Vagina (tissue), 2 donors: ENCODE measurements at regions of chr1 and their contacts with region 1.

Region 1: DNA sequence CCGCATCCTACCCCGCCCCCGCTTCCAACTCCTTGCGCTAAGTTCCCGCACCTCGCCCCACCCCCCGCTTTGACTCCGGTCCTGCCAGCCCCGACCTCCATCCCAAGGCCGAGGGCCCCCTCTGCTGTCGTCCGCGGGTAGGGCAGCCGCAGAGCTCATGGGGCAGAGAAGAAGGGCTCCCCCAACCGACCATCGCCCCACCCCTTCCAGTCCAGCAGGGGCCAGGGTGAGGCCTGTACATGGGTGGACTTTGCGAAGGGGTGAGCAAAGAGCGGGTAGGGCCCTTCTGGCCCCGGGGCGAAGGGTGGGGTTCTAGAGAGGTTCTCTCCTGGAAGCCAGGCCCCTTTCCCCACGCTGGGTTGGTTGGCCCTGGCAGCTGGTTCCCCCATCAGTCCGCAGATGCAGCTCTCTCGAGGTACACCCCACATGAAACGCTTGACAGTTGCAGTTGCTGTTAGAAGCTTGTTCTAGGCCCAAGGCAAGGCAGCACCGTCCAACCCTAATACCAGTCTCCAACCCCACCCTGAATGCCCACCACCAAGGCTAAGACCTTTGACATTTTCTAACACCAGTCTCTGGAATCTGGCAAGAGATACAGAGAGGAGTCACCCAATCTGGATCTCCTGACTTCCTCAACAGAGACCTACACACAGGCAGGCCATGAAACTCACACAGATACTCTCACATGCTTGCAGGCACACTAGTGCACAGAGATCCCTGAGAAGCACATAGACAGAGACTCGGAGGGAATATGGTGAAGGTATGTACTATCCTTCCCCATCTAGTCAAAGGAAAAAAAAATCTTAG is 25.3 kb upstream of the ADGRB2 start:
- DNase-seq: no peak
- H3K4me3 ChIP-seq: peak overlapping the region; percentile 64 to 74
- H3K27ac ChIP-seq: peak overlapping the region; percentile 91
- H3K4me1 ChIP-seq: peaks cover 19% of the 10 kb centered on the region
- H3K27me3 ChIP-seq: no peaks in the 10 kb centered on the region
- CTCF ChIP-seq: peak; percentile 73 to 93 (median 88)
- POLR2A ChIP-seq: no peak

Region 2: DNA sequence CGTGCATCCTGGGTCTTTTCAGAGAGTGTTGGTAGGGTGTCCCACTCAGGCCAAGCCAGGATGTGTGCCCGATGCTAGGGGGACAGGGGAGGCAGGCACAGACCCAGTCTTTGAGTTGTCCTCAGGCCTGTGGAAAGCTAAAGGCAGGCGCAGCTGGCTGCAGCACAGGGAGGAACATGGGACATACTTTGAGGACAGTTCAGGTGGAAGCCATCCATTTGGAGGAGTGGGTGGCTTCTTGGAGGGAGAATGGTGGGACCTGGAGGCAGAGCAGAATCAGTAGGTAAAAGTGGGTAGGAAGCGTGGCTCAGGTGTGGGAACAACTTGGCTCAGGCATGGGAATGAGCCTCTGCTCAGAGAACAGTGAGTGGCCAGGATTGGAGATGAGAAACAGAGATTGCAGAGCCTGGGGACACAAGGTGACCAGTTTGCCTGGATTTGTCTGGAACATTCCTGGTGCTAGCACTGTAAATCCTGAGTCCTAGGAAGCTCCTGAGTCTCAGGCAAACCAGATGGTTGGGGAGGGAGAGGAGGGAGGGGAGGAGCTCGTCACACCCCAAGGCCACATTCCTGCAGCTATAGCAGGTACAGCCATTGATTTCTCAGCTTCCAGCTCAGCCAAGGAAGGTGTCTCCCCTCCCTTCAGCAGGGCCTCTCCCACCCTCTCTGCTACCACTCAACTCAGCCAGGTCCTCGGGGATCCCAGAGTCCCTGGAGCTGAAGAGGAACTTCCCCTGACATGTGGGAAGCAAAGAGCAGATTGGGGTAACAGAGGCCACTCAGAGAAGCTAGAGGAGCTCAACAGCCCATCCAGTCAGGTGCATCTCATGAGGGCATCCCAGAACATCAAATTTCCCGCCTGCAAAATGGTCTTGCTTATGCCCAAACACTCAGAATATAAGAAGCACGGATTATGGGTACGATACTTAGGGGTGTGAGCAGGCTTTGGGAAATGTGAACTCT is 278.3 kb before region 1 on chr1:
- intact Hi-C with region 1: no loop called
- DNase-seq: no peak
- H3K4me3 ChIP-seq: no peak overlapping the region
- H3K27ac ChIP-seq: no peak overlapping the region
- H3K4me1 ChIP-seq: no peaks in the 10 kb centered on the region
- H3K27me3 ChIP-seq: no peaks in the 10 kb centered on the region
- CTCF ChIP-seq: no peak
- POLR2A ChIP-seq: no peak

Region 3: DNA sequence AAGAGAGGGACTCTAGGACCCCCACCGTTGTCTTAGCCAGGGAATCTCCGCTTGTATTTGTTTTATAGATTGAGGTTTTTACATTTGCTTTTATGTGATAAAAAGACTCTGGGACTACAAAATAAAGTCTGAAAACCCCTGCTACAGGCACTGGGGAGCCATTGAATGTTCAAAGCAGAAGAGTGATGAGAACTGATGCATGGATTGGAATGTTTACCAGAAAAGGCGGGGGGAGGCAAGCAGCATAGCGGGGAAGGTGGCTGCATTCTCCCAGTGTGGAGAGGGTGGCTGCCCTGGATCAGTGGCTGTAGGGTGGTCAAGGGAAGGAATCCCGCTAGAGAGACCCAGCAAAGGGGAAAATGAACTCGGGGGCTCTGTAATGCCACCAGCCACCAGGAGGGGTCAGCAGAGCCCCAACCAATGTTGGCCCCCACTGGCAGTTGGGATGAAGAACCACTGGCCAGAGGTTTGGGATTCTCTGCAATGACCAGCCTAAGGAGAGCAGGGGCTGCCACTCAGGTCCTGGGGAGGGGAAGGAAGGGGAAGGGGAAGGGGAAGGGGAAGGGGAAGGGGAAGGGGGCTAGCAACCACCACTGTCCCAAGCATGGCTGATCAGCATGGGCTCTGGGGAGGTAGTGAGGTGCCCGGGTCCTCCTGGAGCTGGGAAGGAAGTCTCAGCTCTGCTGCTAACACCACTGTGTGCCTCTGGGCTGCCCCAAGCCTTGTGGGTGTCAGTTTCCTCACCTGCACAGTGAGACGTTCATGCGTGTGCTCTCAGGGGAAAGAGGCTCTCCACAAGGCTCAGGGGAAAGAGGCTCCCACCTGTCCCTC is 125.6 kb before region 1 on chr1:
- intact Hi-C with region 1: loop called (anchors 2 kb)
- DNase-seq: no peak
- H3K4me3 ChIP-seq: no peak overlapping the region
- H3K27ac ChIP-seq: no peak overlapping the region
- H3K4me1 ChIP-seq: peaks cover 38% of the 10 kb centered on the region
- H3K27me3 ChIP-seq: no peaks in the 10 kb centered on the region
- CTCF ChIP-seq: peak; percentile 89 to 98 (median 92)
- POLR2A ChIP-seq: no peak

Region 4: GRCh38 chr1:31715087-31715872 is 74.2 kb before region 1 on chr1:
- intact Hi-C with region 1: loop called (anchors 5 kb)
- DNase-seq: peak in 1 of 2 donors; percentile 96
- H3K4me3 ChIP-seq: peak overlapping the region; percentile 39 to 58
- H3K27ac ChIP-seq: peak overlapping the region; percentile 90
- H3K4me1 ChIP-seq: peaks cover 46% of the 10 kb centered on the region
- H3K27me3 ChIP-seq: no peaks in the 10 kb centered on the region
- CTCF ChIP-seq: peak; percentile 36 to 81 (median 80)
- POLR2A ChIP-seq: peak in 1 of 2 donors; percentile 64

Region 5: DNA sequence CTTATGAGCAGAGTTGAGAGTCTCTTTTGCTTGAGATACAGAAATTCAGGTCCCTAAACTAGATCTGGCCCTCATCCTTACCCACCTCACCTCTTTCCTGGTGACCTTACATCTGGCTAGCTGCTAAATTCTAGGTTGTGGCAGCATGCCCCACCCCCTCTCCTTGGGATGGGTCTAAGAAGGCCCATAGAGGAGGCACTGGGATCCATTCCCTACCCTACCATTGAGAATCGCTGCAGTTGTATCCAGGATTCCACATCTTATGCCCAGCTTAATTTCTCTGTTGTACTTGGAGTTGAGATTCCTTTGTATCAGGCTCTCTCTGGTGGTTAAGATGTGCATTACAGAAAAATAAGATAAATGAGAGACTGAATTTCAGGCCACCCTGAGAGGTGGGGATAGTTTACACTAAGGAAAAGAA is 273.8 kb after region 1 on chr1:
- intact Hi-C with region 1: loop called (anchors 10 kb)
- DNase-seq: no peak
- H3K4me3 ChIP-seq: no peak overlapping the region
- H3K27ac ChIP-seq: peak overlapping the region; percentile 69
- H3K4me1 ChIP-seq: peaks cover 28% of the 10 kb centered on the region
- H3K27me3 ChIP-seq: no peaks in the 10 kb centered on the region
- CTCF ChIP-seq: peak in 2 of 3 experiments; percentile 63 to 67
- POLR2A ChIP-seq: no peak